ENCODE measurements at regions of chr17 and their contacts with region 1.

Region 1: DNA sequence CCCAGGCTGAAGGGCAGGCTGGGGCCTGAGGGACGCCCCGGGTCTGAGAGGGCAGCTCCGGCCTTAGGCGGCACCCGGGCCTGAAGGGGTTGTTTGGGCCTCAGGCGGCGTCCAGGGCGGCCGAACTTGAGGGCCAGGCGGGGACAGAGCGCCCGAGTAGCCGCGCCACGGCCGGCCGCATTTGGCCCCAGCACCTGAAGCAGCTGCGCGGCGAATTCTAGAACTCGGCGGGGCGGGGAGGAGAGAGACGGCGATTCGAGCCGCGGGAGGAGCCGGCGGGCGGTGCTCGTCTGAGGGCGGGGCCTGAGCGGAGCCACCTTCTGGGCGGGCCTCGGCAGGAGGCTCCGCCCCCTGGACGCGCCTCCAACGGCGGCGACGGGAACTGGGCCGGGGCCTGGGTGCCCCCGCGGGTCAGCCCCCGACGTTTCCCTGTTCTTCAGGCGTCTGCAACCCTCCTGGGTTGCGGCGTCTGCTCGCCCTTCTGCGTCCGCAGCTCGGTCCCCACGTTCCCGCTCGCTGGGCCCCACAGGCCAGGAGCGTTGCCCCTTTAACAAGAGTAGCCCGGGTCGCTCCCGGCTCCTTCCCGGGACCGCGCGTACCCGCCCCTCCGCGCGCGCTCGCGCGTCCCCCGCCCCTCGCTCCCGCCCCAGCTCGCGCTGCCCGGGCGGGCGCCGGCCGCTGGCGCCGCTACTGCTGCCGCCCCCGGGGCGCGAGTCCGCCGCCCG is at the starts of genes INCA1 and KIF1C:
- DNase-seq: peak; percentile 83 to 86 (median 86)
- H3K4me3 ChIP-seq: peak within 1 kb of the TSS; percentile 52 to 89 (median 68)
- H3K4me3 Mint-ChIP-seq: peak within 1 kb of the TSS; percentile 85 to 91
- H3K27ac ChIP-seq: peak within 1 kb of the TSS; percentile 50 to 73
- H3K27ac Mint-ChIP-seq: peak within 1 kb of the TSS in 6 of 7 donors; percentile 66 to 88 (median 80)
- H3K4me1 ChIP-seq: peaks cover 21 to 29% of the 10 kb centered on the region in 2 donors
- H3K4me1 Mint-ChIP-seq: peaks cover 34% of the 10 kb centered on the region
- H3K27me3 ChIP-seq: peaks cover 0 to 10% of the 10 kb centered on the region in 2 donors
- H3K27me3 Mint-ChIP-seq: peaks cover 18 to 31% (median 18%) of the 10 kb centered on the region in 3 donors
- CTCF ChIP-seq: no peak
- polyA plus RNA-seq, gene INCA1: 0.38 to 0.52 (median 0.44) TPM
- polyA plus RNA-seq, gene KIF1C: 3.6 to 12.0 (median 3.9) TPM

Region 2: DNA sequence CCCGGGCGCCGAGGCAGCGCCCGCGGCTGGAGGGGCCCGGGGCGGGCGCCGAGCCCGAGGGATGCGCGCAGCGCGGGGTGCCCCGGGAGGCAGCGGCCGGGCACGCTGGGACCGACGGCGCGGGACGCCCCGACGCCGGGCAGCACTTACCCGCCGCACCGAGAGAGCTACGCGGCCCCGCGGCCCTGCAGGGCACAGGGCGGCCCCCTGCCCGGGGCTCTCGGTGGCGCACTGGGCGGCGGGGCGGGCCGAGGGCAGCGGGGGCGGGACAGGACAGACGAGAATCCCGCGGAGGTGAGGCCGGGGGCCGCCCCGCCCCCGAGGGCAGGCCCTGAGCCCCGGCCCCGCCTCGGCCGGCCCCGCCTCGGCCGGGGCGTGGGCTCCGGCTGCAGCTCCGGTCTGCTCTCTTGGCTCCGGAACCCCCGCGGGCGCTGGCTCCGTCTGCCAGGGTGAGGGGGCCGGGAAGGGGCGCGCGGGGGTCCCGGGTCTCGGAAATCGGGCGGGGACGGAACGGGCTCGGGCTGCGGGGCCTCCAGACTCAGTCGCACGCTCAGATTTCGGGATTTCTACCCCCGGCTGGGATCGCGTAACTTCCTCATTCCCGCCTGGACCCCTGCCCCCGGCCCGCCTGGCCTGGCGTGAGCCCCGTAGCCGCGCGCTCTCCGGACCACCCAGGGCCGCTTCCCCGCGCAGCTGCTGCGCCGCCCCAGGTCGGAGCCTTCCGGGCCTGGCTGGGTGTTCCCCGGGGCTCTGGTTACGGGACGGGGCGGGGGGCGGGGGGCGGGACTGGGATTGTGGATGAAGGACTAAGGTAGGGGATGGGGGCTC is 190.5 kb before region 1 on chr17 and contains the start of gene PLD2:
- intact Hi-C with region 1: loop called in 1 of 2 experiments (anchors 5 kb)
- DNase-seq: peak; percentile 69 to 80 (median 71)
- H3K4me3 ChIP-seq: peak within 1 kb of the TSS; percentile 54 to 91 (median 81)
- H3K4me3 Mint-ChIP-seq: peak within 1 kb of the TSS; percentile 86 to 90
- H3K27ac ChIP-seq: peak within 1 kb of the TSS in 1 of 2 donors; percentile 86
- H3K27ac Mint-ChIP-seq: peak within 1 kb of the TSS in 6 of 7 donors; percentile 45 to 92 (median 65)
- H3K4me1 ChIP-seq: peaks cover 10 to 11% of the 10 kb centered on the region in 2 donors
- H3K4me1 Mint-ChIP-seq: peaks cover 24% of the 10 kb centered on the region
- H3K27me3 ChIP-seq: peaks cover 3 to 28% of the 10 kb centered on the region in 2 donors
- H3K27me3 Mint-ChIP-seq: peaks cover 24 to 48% (median 44%) of the 10 kb centered on the region in 3 donors
- CTCF ChIP-seq: no peak
- polyA plus RNA-seq, gene PLD2: 3.5 to 122 (median 4.0) TPM

Region 3: DNA sequence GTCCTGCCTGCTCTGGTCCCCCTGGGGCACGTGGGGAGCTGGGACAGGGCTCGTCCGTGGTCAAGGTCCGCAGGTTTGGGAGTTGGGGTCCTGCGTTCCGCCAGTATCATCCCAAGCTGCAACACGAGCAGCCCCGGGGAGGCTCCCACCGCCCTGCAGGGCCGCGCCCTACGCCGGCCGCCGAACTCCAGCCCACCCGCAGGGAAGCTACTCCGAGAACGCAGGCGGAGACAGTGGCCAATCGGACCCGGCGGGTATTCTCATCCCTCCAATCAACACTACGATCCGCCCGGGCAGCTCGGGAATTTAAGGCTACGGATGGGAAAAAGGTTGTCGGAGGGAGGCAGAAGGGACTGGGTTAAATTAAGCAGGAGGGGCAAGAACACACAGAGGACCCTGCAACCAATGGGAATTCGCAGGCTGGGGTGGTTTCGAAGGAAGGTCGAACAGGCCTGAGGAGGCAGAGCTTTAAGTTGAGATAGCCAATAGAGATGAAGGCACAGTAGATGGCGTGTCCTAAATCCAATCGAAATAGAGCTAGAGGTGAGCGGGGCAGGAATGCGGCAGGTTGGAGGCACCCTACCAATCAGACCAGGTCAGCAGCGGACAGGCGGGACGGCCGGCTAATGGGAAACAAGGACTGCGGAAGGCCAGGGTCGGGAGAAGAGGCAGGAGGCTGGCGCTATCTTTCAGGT is 30.5 kb before region 1 on chr17:
- intact Hi-C with region 1: no loop called
- DNase-seq: peak; percentile 98 to 99 (median 98)
- H3K4me3 ChIP-seq: peak overlapping the region; percentile 43 to 99 (median 67)
- H3K4me3 Mint-ChIP-seq: no peak overlapping the region
- H3K27ac ChIP-seq: peak overlapping the region; percentile 94 to 96
- H3K27ac Mint-ChIP-seq: no peak overlapping the region
- H3K4me1 ChIP-seq: peaks cover 33 to 58% of the 10 kb centered on the region in 2 donors
- H3K4me1 Mint-ChIP-seq: peaks cover 32% of the 10 kb centered on the region
- H3K27me3 ChIP-seq: no peaks in the 10 kb centered on the region
- H3K27me3 Mint-ChIP-seq: peaks cover 0 to 4% (median 2%) of the 10 kb centered on the region in 3 donors
- CTCF ChIP-seq: no peak

Region 4: DNA sequence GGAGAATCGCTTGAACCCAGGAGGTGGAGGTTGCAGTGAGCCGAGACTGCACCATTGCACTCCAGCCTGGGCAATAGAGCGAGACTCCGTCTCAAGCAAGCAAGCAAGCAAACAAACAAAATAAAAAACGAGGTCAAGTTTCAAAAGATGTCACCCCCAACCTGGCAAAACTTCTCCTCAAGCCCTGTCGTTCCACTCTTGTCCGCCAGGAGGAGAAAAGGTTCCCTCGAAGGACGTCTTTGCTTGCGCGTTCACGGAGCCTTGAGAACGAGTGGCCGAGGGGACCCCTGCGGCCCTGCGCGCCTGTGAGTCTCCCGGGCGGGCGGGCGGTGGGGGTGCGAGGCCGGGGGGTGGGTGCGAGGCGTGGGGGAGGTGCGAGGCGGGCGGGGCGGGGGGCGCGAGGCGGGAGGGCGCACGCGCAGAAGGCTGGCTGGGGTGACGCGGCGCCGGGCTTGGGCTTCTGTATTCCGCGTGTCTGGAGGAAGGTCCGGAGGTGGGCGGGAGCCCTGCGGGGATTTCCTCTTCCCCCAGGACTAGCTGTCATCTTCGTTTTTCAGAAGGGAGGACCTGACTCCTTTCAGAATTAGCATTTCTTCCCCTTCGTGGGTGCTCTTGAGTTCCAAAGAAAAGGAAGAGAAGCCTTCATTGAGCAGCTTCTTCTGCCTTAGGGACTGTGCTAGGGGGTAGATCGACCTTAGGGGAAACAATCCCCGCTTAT is 34.1 kb after region 1 on chr17:
- intact Hi-C with region 1: loop called in 1 of 2 experiments (anchors 5 kb)
- DNase-seq: peak; percentile 87 to 92 (median 88)
- H3K4me3 ChIP-seq: peak overlapping the region in 2 of 3 experiments; percentile 27 to 64
- H3K4me3 Mint-ChIP-seq: peak overlapping the region; percentile 73 to 85
- H3K27ac ChIP-seq: peak overlapping the region; percentile 71 to 87
- H3K27ac Mint-ChIP-seq: peak overlapping the region; percentile 92 to 98 (median 94)
- H3K4me1 ChIP-seq: peaks cover 21 to 26% of the 10 kb centered on the region in 2 donors
- H3K4me1 Mint-ChIP-seq: peaks cover 30% of the 10 kb centered on the region
- H3K27me3 ChIP-seq: peaks cover 2 to 17% of the 10 kb centered on the region in 2 donors
- H3K27me3 Mint-ChIP-seq: peaks cover 13 to 31% (median 23%) of the 10 kb centered on the region in 3 donors
- CTCF ChIP-seq: peak; percentile 75